Motor neuron (in vitro differentiated cells): ENCODE measurements at regions of chr9 and their contacts with region 1.

Region 1: DNA sequence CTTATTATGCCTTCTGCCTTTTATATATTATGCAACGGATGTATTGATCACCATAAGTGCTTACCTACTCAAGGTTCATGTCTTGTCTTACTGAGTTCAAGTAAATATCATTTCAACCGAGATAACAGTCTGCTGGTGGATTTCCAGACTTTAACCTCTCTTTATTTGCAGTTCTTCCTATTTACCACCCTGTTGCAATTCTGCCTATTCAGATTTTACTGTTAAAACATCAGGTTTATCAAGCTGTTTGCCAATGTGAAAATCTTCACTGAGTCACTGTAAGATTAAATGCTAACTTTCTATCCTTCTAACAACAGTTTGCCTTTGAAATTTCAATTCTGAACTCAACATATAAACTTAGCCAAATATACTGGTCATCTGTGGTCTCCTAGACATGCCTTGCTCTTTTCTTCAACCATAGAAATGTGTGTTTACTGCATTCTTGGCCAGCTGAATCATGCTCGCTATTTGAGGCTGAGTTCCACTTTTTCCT is 471.7 kb upstream of the RORB start:
- ATAC-seq: peak in 1 of 8 experiments; percentile 73
- H3K4me3 ChIP-seq: no peak overlapping the region
- H3K27ac ChIP-seq: no peak overlapping the region
- H3K4me1 ChIP-seq: no peaks in the 10 kb centered on the region

Region 2: GRCh38 chr9:73962792-73963191 is 62.7 kb before region 1 on chr9:
- in situ Hi-C with region 1: loop called in 1 of 9 experiments (anchors 10 kb)
- ATAC-seq: no peak
- H3K4me3 ChIP-seq: no peak overlapping the region
- H3K27ac ChIP-seq: no peak overlapping the region
- H3K4me1 ChIP-seq: no peaks in the 10 kb centered on the region

Region 3: GRCh38 chr9:74478606-74479005 is 453.2 kb after region 1 on chr9:
- in situ Hi-C with region 1: no loop called
- ATAC-seq: no peak
- H3K4me3 ChIP-seq: no peak overlapping the region
- H3K27ac ChIP-seq: no peak overlapping the region
- H3K4me1 ChIP-seq: peaks cover 0 to 6% of the 10 kb centered on the region in 2 donors